ENCODE measurements at regions of chr1 and their contacts with region 1.

Region 1: GRCh38 chr1:236381565-236382158 is 12.4 kb upstream of the EDARADD start:
- DNase-seq: no peak
- ATAC-seq: no peak
- H3K4me3 ChIP-seq: no peak overlapping the region
- H3K27ac ChIP-seq: no peak overlapping the region
- H3K4me1 ChIP-seq: no peaks in the 10 kb centered on the region
- H3K27me3 ChIP-seq: no peaks in the 10 kb centered on the region
- CTCF ChIP-seq: no peak

Region 2: DNA sequence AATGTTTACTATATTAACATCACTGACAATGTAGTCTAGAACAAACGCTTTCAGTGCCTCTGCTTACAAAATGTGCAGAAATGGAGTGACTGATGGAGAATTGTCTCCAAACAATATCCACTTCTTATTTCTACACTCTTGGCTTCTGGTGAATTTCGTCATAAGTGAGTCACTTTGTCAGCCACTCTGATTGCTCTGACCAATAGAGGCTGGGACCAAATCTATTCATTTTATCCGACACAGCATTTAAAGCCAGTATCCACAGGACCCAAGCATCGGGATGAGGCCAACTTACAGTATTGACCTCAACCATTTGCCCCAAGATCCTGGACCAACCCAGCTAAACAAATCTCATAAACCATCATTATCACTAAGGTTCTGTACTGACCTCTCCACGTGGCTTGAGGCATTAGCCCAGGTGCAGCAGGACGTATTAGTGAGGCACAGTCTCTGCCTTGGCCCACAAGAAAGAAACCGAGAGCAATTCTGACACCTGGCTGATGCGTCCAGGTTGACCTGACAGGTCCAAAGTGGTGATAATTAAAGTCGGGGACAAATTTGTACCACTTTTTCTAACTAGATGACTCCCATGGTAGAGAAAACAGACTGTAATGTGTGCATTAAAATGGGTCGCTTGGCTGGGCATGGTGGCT is 46.6 kb before region 1 on chr1:
- CTCF ChIA-PET with region 1: no interaction called
- POLR2A ChIA-PET with region 1: interaction called, 10 read pairs
- in situ Hi-C with region 1: no loop called
- intact Hi-C with region 1: no loop called
- DNase-seq: no peak
- ATAC-seq: no peak
- H3K4me3 ChIP-seq: no peak overlapping the region
- H3K27ac ChIP-seq: no peak overlapping the region
- H3K4me1 ChIP-seq: no peaks in the 10 kb centered on the region
- H3K27me3 ChIP-seq: no peaks in the 10 kb centered on the region
- CTCF ChIP-seq: no peak

Region 3: GRCh38 chr1:236345728-236346127 is 35.9 kb before region 1 on chr1:
- CTCF ChIA-PET with region 1: interaction called, 10 read pairs
- POLR2A ChIA-PET with region 1: interaction called, 3 read pairs
- in situ Hi-C with region 1: no loop called
- intact Hi-C with region 1: no loop called
- DNase-seq: no peak
- ATAC-seq: peak; percentile 44; the same call in 1 of the 2 replicates
- H3K4me3 ChIP-seq: no peak overlapping the region
- H3K27ac ChIP-seq: peak overlapping the region; percentile 77; the same call in 1 of the 2 replicates
- H3K4me1 ChIP-seq: peaks cover 18% of the 10 kb centered on the region
- H3K27me3 ChIP-seq: no peaks in the 10 kb centered on the region
- CTCF ChIP-seq: peak; percentile 66

Region 4: GRCh38 chr1:236354330-236355147 is 27.1 kb before region 1 on chr1:
- CTCF ChIA-PET with region 1: interaction called, 14 read pairs
- POLR2A ChIA-PET with region 1: no interaction called
- in situ Hi-C with region 1: no loop called
- intact Hi-C with region 1: no loop called
- DNase-seq: no peak
- ATAC-seq: no peak; the same call in 1 of the 2 replicates
- H3K4me3 ChIP-seq: no peak overlapping the region
- H3K27ac ChIP-seq: peak overlapping the region; percentile 60; the same call in 1 of the 2 replicates
- H3K4me1 ChIP-seq: peaks cover 13% of the 10 kb centered on the region; the same call in 1 of the 2 replicates
- H3K27me3 ChIP-seq: no peaks in the 10 kb centered on the region
- CTCF ChIP-seq: no peak

Region 5: DNA sequence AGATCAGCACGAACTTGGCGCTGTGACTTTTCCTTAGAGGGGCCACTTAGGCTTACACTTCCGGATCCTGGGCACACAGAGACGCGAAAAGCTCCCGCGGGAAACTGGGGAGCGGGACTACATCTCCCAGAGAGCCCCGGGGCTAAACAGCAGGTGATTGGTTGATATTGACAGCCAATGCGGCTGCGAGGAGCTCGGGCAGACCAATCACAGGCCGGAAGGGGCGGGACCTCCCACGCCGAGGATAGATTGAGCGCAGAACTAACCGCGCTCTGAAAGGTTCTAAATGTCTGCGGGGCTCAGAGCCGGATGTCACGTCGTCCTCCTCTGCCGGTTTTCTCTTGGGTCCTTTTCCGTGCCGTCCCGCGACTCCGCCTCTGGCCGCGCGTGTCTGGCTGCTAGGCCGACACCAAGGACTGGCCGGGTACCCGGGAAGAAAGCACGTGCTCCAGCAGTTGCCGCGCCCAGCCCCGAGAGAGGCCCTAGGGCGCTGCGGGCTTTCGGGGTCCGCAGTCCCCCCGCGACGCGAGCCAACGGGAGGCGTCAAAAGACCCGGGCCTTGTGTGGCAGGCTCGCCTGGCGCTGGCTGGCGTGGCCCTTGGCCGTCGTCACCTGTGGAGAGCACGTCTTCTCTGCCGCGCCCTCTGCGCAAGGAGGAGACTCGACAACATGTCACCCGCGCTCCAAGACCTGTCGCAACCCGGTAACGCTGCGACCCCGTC is 413.5 kb after region 1 on chr1 and contains the start of gene MTR:
- CTCF ChIA-PET with region 1: no interaction called
- POLR2A ChIA-PET with region 1: interaction called, 21 read pairs
- in situ Hi-C with region 1: no loop called
- intact Hi-C with region 1: no loop called
- DNase-seq: peak; percentile 90
- ATAC-seq: peak; percentile 99
- H3K4me3 ChIP-seq: peak within 1 kb of the TSS; percentile 77 to 89
- H3K27ac ChIP-seq: peak within 1 kb of the TSS; percentile 88
- H3K4me1 ChIP-seq: peaks cover 9% of the 10 kb centered on the region; the same call in 1 of the 2 replicates
- H3K27me3 ChIP-seq: no peaks in the 10 kb centered on the region; the same call in 1 of the 2 replicates
- CTCF ChIP-seq: no peak
- total RNA-seq, gene MTR: 33.7 TPM

Measured in Panc1 (cell line).